GM12878 (cell line): ENCODE measurements at regions of chr10 and their contacts with region 1.

Region 1: DNA sequence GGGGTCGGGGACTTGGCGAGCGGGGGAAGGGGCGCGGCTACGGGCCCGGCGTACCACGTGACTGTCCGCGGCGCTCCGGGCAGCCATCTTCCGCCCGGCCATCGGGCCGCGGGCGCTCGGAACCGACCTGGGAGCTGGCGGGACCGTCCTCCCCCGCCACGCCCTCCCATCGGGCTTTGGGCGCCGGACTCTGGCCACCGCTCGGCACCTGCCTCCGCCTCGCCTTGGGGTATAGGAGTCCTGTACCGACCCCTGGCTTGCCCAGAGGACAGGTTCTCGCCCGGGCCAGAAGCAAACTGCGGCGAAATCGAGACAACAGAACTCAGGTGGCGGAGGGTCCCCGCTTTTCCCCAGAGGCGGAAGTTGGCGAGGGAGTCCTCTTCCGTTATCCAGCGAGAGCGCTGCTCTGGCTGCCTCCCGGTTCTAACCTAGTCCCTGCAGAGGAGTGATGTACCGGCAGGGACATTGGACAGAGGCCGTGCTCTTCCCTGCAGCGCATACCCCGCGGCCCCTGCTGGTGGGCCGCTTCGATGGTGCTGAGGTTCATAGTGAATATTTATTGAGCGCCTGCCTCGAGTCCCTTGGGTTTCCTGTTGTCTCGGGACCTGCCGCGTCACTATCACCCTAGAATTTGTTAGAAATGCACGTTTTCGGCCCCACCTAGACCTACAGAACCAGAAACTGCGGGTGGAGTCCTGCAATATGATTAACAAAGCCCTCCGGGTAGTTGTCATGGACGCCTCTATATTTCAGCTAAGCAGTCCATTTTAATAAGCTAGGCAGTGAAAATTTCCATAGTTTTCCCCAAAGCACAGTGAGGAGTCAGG is 1.3 kb upstream of the SGMS1 start:
- DNase-seq: no peak
- ATAC-seq: peak; percentile 69
- H3K4me3 ChIP-seq: peak overlapping the region; percentile 86
- H3K27ac ChIP-seq: peak overlapping the region; percentile 94
- H3K4me1 ChIP-seq: no peaks in the 10 kb centered on the region
- H3K27me3 ChIP-seq: no peaks in the 10 kb centered on the region
- CTCF ChIP-seq: peak; percentile 52 to 70 (median 56)
- EP300 ChIP-seq: no peak
- POLR2A ChIP-seq: peak; percentile 89
- RAD21 ChIP-seq: peak; percentile 52

Region 2: GRCh38 chr10:50367732-50368131 is 257.3 kb before region 1 on chr10:
- CTCF ChIA-PET with region 1: interaction called, 13 read pairs
- POLR2A ChIA-PET with region 1: no interaction called
- RAD21 ChIA-PET with region 1: interaction called, 10 read pairs
- SMC1A ChIA-PET with region 1: interaction called, 4 read pairs
- in situ Hi-C with region 1: no loop called
- intact Hi-C with region 1: loop called (anchors 5 kb)
- DNase-seq: no peak
- ATAC-seq: peak; percentile 62
- H3K4me3 ChIP-seq: no peak overlapping the region
- H3K27ac ChIP-seq: no peak overlapping the region
- H3K4me1 ChIP-seq: peaks cover 17% of the 10 kb centered on the region
- H3K27me3 ChIP-seq: no peaks in the 10 kb centered on the region
- CTCF ChIP-seq: peak; percentile 29 to 43 (median 30); a peak in 4 of 6 replicates
- EP300 ChIP-seq: no peak
- POLR2A ChIP-seq: no peak
- RAD21 ChIP-seq: peak; percentile 49

Region 3: GRCh38 chr10:50552771-50553535 is 72.1 kb before region 1 on chr10:
- CTCF ChIA-PET with region 1: interaction called, 11 read pairs
- POLR2A ChIA-PET with region 1: no interaction called
- RAD21 ChIA-PET with region 1: interaction called, 6 read pairs
- SMC1A ChIA-PET with region 1: interaction called, 13 read pairs
- in situ Hi-C with region 1: no loop called
- intact Hi-C with region 1: no loop called
- DNase-seq: no peak
- ATAC-seq: peak; percentile 82
- H3K4me3 ChIP-seq: no peak overlapping the region
- H3K27ac ChIP-seq: no peak overlapping the region
- H3K4me1 ChIP-seq: no peaks in the 10 kb centered on the region
- H3K27me3 ChIP-seq: no peaks in the 10 kb centered on the region
- CTCF ChIP-seq: peak; percentile 27 to 33 (median 29); a peak in 3 of 6 replicates
- EP300 ChIP-seq: no peak
- POLR2A ChIP-seq: no peak
- RAD21 ChIP-seq: peak; percentile 22; the same call in 1 of the 2 replicates

Region 4: DNA sequence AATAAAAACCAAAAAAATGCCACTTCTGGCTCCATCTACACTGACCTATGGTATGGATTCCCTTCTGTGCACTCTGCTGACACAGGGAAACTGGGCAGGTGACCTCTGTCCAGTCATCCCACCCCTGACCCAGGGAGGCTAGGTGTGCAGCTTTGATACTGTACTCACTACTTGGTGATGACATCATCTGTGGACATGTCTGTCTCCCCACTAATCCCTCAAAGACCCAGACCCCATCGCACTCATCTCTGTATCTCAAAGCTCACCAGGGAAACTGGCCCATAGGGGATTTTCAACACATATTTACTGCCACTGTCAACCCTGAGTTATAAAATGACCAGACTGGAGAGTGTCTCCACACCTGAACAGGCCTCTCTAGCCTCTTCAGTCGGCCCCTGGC is 11.9 kb before region 1 on chr10:
- CTCF ChIA-PET with region 1: interaction called, 7 read pairs
- POLR2A ChIA-PET with region 1: interaction called, 8 read pairs
- RAD21 ChIA-PET with region 1: interaction called, 9 read pairs
- SMC1A ChIA-PET with region 1: interaction called, 15 read pairs
- in situ Hi-C with region 1: no loop called
- intact Hi-C with region 1: no loop called
- DNase-seq: no peak
- ATAC-seq: peak; percentile 83
- H3K4me3 ChIP-seq: no peak overlapping the region
- H3K27ac ChIP-seq: no peak overlapping the region
- H3K4me1 ChIP-seq: peaks cover 8% of the 10 kb centered on the region
- H3K27me3 ChIP-seq: no peaks in the 10 kb centered on the region
- CTCF ChIP-seq: no peak
- EP300 ChIP-seq: no peak
- POLR2A ChIP-seq: no peak
- RAD21 ChIP-seq: no peak

Region 5: DNA sequence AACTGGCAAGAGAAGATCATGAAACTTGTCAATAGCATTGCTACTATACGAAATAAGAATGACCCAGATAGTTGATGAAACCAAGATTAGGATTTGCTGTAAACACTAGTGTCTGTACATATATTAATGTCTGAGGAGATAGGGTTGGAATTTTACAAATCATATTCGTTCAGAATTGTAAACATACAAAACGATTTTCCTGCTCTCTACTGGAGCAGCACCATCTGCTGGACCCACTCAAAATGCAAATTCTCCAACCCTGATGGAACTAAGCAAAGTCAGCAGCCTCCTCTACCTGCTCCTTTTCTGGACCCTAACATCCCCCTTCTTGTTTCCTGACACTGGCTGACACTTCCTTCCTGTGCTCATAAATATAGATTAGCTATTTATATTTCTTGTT is 28.1 kb after region 1 on chr10:
- CTCF ChIA-PET with region 1: interaction called, 8 read pairs
- POLR2A ChIA-PET with region 1: interaction called, 5 read pairs
- RAD21 ChIA-PET with region 1: interaction called, 24 read pairs
- SMC1A ChIA-PET with region 1: interaction called, 32 read pairs
- in situ Hi-C with region 1: no loop called
- intact Hi-C with region 1: loop called (anchors 1 kb)
- DNase-seq: no peak
- ATAC-seq: peak; percentile 27
- H3K4me3 ChIP-seq: no peak overlapping the region
- H3K27ac ChIP-seq: no peak overlapping the region
- H3K4me1 ChIP-seq: peaks cover 28% of the 10 kb centered on the region
- H3K27me3 ChIP-seq: no peaks in the 10 kb centered on the region
- CTCF ChIP-seq: peak; percentile 16 to 66 (median 53); a peak in 4 of 6 replicates
- EP300 ChIP-seq: no peak
- POLR2A ChIP-seq: no peak
- RAD21 ChIP-seq: peak; percentile 45